A673 (cell line): ENCODE measurements at regions of chr17 and their contacts with region 1.

Region 1: DNA sequence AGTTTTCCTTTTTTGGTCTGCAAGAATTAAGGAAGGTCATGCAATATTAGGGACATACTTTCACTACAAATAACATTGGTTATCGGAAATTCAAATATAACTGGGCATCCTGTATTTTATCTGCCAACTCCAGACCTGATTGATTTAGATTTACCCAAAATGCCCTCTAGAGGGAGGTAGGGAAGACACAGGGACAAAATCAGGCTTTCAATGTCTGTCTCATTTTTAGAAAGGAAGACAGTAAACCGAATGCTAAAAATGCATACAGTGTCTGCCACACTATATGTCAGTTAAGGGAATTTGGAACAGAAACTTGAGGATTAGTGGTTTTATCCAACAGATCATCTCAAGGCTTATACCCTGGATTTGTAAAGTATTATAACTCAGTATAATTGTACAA is 161.7 kb upstream of the SOX9 start:
- DNase-seq: peak; percentile 42
- H3K4me3 ChIP-seq: no peak overlapping the region
- H3K27ac ChIP-seq: no peak overlapping the region
- H3K4me1 ChIP-seq: no peaks in the 10 kb centered on the region
- H3K27me3 ChIP-seq: no peaks in the 10 kb centered on the region
- CTCF ChIP-seq: peak; percentile 63

Region 2: GRCh38 chr17:71741836-71742235 is 217.3 kb before region 1 on chr17:
- CTCF ChIA-PET with region 1: no interaction called
- POLR2A ChIA-PET with region 1: no interaction called
- intact Hi-C with region 1: no loop called
- DNase-seq: no peak
- H3K4me3 ChIP-seq: no peak overlapping the region
- H3K27ac ChIP-seq: no peak overlapping the region
- H3K4me1 ChIP-seq: no peaks in the 10 kb centered on the region
- H3K27me3 ChIP-seq: no peaks in the 10 kb centered on the region
- CTCF ChIP-seq: no peak

Region 3: DNA sequence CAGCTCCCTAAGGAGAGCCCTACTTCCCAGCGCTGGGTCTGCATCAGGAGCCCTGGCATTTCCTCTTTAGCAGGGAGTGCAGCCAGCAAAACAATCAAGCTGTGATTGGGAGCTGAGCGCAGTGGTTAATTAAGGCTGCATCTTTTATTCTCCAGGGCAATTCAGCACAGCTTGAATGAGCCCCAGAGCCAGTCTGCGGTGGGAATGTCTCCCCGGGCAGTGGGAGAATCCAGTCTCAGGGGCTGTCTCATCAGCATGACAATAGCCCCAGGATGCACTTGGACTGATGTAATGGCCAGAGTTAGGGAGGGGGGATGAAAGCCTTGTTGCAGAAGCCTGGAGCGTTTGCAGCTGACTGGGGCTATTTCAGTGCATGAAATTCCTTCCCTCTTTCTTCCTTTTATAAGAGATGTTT is 131.0 kb before region 1 on chr17:
- CTCF ChIA-PET with region 1: no interaction called
- POLR2A ChIA-PET with region 1: no interaction called
- intact Hi-C with region 1: no loop called
- DNase-seq: peak; percentile 97
- H3K4me3 ChIP-seq: no peak overlapping the region
- H3K27ac ChIP-seq: no peak overlapping the region
- H3K4me1 ChIP-seq: peaks cover 36% of the 10 kb centered on the region
- H3K27me3 ChIP-seq: no peaks in the 10 kb centered on the region
- CTCF ChIP-seq: no peak

Region 4: GRCh38 chr17:71933306-71933705 is 25.8 kb before region 1 on chr17:
- CTCF ChIA-PET with region 1: no interaction called
- POLR2A ChIA-PET with region 1: no interaction called
- intact Hi-C with region 1: loop called (anchors 1 kb)
- DNase-seq: no peak
- H3K4me3 ChIP-seq: no peak overlapping the region
- H3K27ac ChIP-seq: no peak overlapping the region
- H3K4me1 ChIP-seq: no peaks in the 10 kb centered on the region
- H3K27me3 ChIP-seq: no peaks in the 10 kb centered on the region
- CTCF ChIP-seq: no peak